ENCODE measurements at regions of chr11 and their contacts with region 1.

Region 1: DNA sequence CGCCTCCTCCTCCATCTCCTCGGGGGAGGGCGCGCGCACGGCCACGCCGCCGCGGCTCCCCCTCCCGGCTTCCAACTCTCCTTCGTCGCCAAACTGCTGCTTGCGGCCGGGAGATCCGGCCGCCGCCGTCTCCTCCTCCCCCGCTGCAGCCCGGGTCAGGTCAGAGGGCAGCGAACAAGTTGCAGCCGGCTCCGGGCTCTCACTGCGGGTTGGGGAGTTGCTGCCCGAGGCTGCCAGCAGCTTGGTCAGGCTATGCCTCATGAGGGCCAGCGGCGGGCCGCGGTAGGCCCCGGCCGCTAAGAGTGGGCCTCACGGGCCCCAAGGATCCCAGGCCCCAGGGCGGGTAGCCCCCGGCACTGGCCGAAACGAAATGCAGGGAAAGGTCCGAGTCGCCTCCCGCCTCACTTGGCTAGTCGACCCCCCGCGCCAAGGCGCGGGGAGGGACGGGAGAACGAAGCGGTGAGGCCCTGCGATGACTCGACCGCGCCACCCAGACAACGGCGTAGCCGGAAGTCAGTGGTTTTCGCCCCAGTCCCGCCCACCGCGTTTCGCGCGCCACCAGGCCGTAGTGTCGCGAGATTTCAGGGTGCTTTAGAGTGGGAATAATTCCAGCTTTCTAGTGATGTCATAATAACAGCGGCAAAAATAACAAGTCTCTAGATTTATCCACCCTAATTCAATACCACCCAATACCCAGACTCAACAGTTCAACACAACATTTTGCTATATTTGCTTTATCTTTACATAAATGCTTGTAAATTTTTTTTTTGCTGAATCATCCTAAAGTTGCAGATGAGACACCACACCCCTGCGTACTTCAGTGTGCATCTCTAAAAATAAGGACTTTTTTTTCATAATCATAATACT is at the start of gene CREBZF:
- DNase-seq: peak; percentile 86 to 95 (median 90)
- ATAC-seq: peak; percentile 62
- H3K4me3 ChIP-seq: peak within 1 kb of the TSS; percentile 94
- H3K4me3 Mint-ChIP-seq: peak within 1 kb of the TSS; percentile 100
- H3K27ac ChIP-seq: peak within 1 kb of the TSS; percentile 97 to 99
- H3K27ac Mint-ChIP-seq: peak within 1 kb of the TSS; percentile 100
- H3K4me1 ChIP-seq: peaks cover 14% of the 10 kb centered on the region
- H3K4me1 Mint-ChIP-seq: peaks cover 58% of the 10 kb centered on the region
- H3K27me3 ChIP-seq: no peaks in the 10 kb centered on the region
- H3K27me3 Mint-ChIP-seq: no peaks in the 10 kb centered on the region
- CTCF ChIP-seq: no peak
- total RNA-seq, gene CREBZF: 54.8 to 55.9 TPM

Region 2: GRCh38 chr11:85647604-85648299 is 17.1 kb before region 1 on chr11 and contains the start of gene TMEM126A:
- CTCF ChIA-PET with region 1: interaction called, 9 read pairs
- POLR2A ChIA-PET with region 1: interaction called, 136 read pairs
- intact Hi-C with region 1: loop called (anchors 1 to 2 kb)
- DNase-seq: peak; percentile 81 to 95 (median 88)
- ATAC-seq: peak; percentile 99
- H3K4me3 ChIP-seq: peak within 1 kb of the TSS; percentile 84
- H3K4me3 Mint-ChIP-seq: peak within 1 kb of the TSS; percentile 97
- H3K27ac ChIP-seq: peak within 1 kb of the TSS; percentile 77 to 84
- H3K27ac Mint-ChIP-seq: peak within 1 kb of the TSS; percentile 89
- H3K4me1 ChIP-seq: peaks cover 20% of the 10 kb centered on the region
- H3K4me1 Mint-ChIP-seq: peaks cover 44% of the 10 kb centered on the region
- H3K27me3 ChIP-seq: peaks cover 0 to 8% of the 10 kb centered on the region in 2 experiments
- H3K27me3 Mint-ChIP-seq: peaks cover 23% of the 10 kb centered on the region
- CTCF ChIP-seq: no peak
- total RNA-seq, gene TMEM126A: 17.0 to 19.5 TPM

Region 3: GRCh38 chr11:85752890-85753581 is 88.2 kb after region 1 on chr11:
- CTCF ChIA-PET with region 1: no interaction called
- POLR2A ChIA-PET with region 1: interaction called, 12 read pairs
- intact Hi-C with region 1: loop called (anchors 1 to 5 kb)
- DNase-seq: peak; percentile 70 to 99 (median 84)
- ATAC-seq: peak; percentile 84
- H3K4me3 ChIP-seq: peak overlapping the region; percentile 32
- H3K4me3 Mint-ChIP-seq: peak overlapping the region; percentile 87
- H3K27ac ChIP-seq: peak overlapping the region; percentile 52 to 66
- H3K27ac Mint-ChIP-seq: peak overlapping the region; percentile 91
- H3K4me1 ChIP-seq: peaks cover 77% of the 10 kb centered on the region
- H3K4me1 Mint-ChIP-seq: peaks cover 95% of the 10 kb centered on the region
- H3K27me3 ChIP-seq: no peaks in the 10 kb centered on the region
- H3K27me3 Mint-ChIP-seq: peaks cover 7% of the 10 kb centered on the region
- CTCF ChIP-seq: peak; percentile 22

Region 4: DNA sequence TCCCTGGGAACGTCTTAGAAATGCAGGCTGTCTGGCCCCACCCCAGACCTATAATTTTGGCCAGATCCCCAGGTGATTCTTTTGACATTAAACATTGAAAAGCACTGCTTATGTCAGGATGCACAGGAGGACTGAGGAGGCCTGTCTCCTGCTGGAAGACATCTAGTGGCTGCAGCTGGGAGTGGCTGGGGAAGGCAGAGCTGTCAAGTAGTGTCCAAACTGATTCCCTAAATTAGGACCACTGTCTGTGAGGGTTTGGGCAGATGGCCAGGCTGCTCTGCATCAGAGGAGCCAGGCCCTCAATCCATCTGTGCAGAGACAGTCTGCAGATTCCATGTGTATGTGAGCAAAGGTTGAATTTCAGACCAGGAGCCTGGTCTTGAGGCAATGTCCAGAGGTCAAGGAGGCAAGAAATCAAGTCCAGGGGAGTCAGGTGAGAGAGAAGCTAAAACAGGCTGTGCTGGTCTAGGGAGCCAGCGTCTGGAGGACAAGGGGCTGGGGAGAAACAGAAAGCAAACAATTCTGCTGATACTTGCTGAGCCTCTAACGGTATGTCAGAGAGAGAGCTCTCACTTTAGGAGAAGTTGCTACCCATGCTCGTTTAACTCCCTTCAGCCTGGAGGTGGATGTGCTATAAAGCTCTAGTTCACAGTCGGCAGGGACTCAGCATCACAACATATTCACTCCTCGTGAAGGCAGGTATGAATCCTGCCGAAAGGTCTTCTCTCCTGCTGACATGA is 161.4 kb after region 1 on chr11:
- CTCF ChIA-PET with region 1: interaction called, 3 read pairs
- POLR2A ChIA-PET with region 1: interaction called, 13 read pairs
- intact Hi-C with region 1: loop called in 1 of 2 experiments (anchors 5 kb)
- DNase-seq: peak in 4 of 14 experiments; percentile 26 to 53 (median 48)
- ATAC-seq: no peak
- H3K4me3 ChIP-seq: no peak overlapping the region
- H3K4me3 Mint-ChIP-seq: peak overlapping the region; percentile 22
- H3K27ac ChIP-seq: peak overlapping the region in 1 of 2 donors; percentile 49
- H3K27ac Mint-ChIP-seq: peak overlapping the region; percentile 86
- H3K4me1 ChIP-seq: peaks cover 59% of the 10 kb centered on the region
- H3K4me1 Mint-ChIP-seq: peaks cover 65% of the 10 kb centered on the region
- H3K27me3 ChIP-seq: no peaks in the 10 kb centered on the region
- H3K27me3 Mint-ChIP-seq: no peaks in the 10 kb centered on the region
- CTCF ChIP-seq: peak; percentile 33

Region 5: DNA sequence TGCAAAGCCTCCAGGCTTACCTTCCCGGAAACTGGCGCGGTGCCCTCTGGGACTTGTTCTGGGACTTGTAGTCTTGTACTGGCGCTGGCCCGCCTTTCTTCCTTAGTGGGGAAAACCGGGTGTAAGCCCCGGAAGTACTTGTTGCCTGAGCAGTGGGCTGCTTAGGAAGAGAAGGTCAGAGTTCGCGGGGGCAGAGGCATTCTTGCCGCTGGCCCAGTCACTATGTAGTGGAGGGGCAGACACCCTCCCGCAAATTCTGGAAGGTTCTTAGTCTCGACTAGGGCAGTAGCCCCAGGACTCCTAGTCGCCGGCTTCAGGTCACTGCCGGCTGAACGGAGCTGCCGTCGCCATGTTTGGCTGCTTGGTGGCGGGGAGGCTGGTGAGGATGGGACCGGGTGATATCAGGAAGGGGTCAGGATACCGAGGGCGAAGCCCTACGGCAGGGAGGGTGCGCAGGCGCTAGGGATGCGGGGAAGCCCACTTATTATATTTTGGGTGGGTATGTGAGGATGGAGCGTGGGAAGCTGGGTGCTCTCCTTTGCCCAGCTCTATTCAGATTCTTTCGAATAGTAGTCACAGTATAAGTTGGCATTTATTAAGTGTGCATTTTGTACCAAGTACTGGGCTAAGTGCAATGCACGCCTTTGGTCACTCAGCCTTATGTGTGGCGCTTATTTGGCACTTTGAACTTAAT is 637.4 kb after region 1 on chr11 and contains the start of gene HIKESHI:
- CTCF ChIA-PET with region 1: no interaction called
- POLR2A ChIA-PET with region 1: interaction called, 4 read pairs
- intact Hi-C with region 1: loop called in 1 of 2 experiments (anchors 10 kb)
- DNase-seq: peak; percentile 81 to 95 (median 90)
- ATAC-seq: peak; percentile 97
- H3K4me3 ChIP-seq: peak within 1 kb of the TSS; percentile 83
- H3K4me3 Mint-ChIP-seq: peak within 1 kb of the TSS; percentile 99
- H3K27ac ChIP-seq: peak within 1 kb of the TSS; percentile 58 to 85
- H3K27ac Mint-ChIP-seq: peak within 1 kb of the TSS; percentile 98
- H3K4me1 ChIP-seq: peaks cover 3% of the 10 kb centered on the region
- H3K4me1 Mint-ChIP-seq: peaks cover 33% of the 10 kb centered on the region
- H3K27me3 ChIP-seq: no peaks in the 10 kb centered on the region
- H3K27me3 Mint-ChIP-seq: no peaks in the 10 kb centered on the region
- CTCF ChIP-seq: no peak
- total RNA-seq, gene HIKESHI: 6.3 to 6.6 TPM